ENCODE measurements at regions of chr4 and their contacts with region 1.

Region 1: DNA sequence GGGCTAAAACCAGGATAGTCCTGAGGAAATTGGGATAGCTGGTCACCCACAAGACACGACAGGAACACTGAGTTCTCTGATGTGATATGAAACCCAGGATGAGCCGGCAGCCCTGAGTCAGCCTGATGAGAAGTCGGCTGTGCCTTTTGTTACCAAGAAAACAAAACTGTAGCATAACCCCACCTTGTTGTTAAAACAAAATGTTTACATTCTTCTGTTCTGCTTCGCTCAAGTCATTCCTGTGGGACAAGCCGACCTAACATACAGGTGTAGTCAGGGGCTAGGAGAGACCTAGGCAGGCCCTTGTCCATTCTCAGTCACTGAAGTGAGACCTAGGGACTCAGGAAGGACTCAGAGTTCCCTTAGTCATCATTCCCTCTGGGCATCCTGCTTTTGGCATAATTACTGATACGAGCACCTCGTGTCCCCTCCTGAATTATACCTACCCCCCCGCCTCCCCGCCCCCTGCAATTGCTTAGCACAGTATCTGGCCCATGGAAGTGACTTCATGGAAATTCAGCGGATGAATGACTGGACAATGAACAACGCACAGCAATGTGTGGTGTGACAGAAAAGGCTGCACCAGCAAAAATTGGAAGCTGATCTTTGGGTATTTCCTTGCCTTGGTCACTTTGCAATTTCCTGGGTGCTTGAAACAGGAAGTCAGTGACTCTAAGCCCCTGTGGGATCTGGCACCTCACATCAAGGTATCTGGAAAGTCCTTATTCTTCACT is 31.9 kb upstream of the TLR2 start:
- DNase-seq: no peak
- ATAC-seq: peak in 1 of 4 experiments; percentile 11
- H3K4me3 ChIP-seq: no peak overlapping the region
- H3K4me3 Mint-ChIP-seq: peak overlapping the region in 1 of 3 donors; percentile 19
- H3K27ac ChIP-seq: no peak overlapping the region
- H3K27ac Mint-ChIP-seq: peak overlapping the region; percentile 82 to 84
- H3K4me1 ChIP-seq: peaks cover 16 to 19% of the 10 kb centered on the region in 2 experiments
- H3K4me1 Mint-ChIP-seq: peaks cover 26 to 32% (median 31%) of the 10 kb centered on the region in 3 donors
- H3K27me3 ChIP-seq: no peaks in the 10 kb centered on the region
- H3K27me3 Mint-ChIP-seq: peaks cover 0 to 5% of the 10 kb centered on the region in 2 donors

Region 2: GRCh38 chr4:153684182-153684970 is 32.2 kb after region 1 on chr4 and contains the start of gene TLR2:
- CTCF ChIA-PET with region 1: interaction called in 1 of 2 experiments, 11 read pairs
- POLR2A ChIA-PET with region 1: no interaction called
- DNase-seq: peak; percentile 25 to 78 (median 59)
- ATAC-seq: peak; percentile 80 to 93 (median 82)
- H3K4me3 ChIP-seq: peak within 1 kb of the TSS; percentile 59 to 63
- H3K4me3 Mint-ChIP-seq: peak within 1 kb of the TSS; percentile 81 to 88 (median 85)
- H3K27ac ChIP-seq: no peak within 1 kb of the TSS
- H3K27ac Mint-ChIP-seq: peak within 1 kb of the TSS in 1 of 2 donors; percentile 7
- H3K4me1 ChIP-seq: peaks cover 0 to 16% of the 10 kb centered on the region in 2 experiments
- H3K4me1 Mint-ChIP-seq: peaks cover 16 to 18% (median 16%) of the 10 kb centered on the region in 3 donors
- H3K27me3 ChIP-seq: peaks cover 0 to 26% of the 10 kb centered on the region in 2 experiments
- H3K27me3 Mint-ChIP-seq: peaks cover 16 to 23% of the 10 kb centered on the region in 2 donors
- total RNA-seq, gene TLR2: 1.1 to 2.3 (median 1.9) TPM